Activated CD4-positive, alpha-beta memory T cell treated with anti-CD3 and anti-CD28 coated beads for 36 hours (primary cell): ENCODE measurements at regions of chr1 and their contacts with region 1.

Region 1: DNA sequence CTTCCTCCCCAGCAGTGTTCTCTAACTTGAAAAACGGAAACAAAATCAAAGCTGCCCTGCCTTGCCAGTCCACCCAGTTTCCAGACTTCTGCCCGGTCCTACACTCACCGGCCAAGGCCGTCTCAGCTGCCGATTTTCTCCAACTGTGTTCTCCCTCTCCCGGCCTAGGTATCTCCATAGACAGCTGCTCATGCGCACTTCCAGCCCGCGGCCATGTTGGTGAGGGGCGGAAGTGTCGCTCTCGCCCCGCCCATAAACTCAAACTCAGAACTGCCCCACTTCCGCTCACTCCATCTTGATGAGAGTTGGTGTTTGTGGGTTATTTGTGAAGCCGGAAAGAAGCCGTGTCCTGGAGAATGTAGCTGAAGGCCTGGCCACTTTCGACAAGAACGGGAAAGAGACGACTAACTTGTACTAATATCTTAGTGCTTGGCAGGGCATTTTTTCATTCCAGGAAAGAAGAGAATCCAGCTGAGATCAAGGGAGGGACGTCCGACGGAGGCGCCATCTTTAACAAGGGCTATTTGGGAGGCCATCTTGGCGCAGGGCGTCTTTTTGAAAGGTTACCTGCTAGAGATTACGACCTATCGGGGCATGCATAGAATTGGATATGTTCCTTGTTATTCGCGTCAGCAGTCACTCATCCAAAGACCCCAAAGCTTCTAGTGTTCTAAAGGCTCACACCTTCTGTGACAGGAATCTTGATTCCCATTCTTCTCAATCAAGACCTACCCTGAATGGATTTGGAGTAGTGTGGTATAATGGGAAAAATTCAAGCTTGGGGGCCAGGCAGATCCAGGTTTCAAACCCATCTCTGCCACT is at the start of gene USF1:
- DNase-seq: peak; percentile 96
- H3K4me3 Mint-ChIP-seq: peak within 1 kb of the TSS; percentile 90
- H3K27ac Mint-ChIP-seq: peak within 1 kb of the TSS; percentile 96
- H3K4me1 Mint-ChIP-seq: peaks cover 29% of the 10 kb centered on the region
- H3K27me3 Mint-ChIP-seq: no peaks in the 10 kb centered on the region
- total RNA-seq, gene USF1: 43.4 to 43.7 TPM

Region 2: GRCh38 chr1:160997323-160998038 is 48.5 kb before region 1 on chr1:
- CTCF ChIA-PET with region 1: interaction called, 33 read pairs
- POLR2A ChIA-PET with region 1: interaction called, 7 read pairs
- intact Hi-C with region 1: loop called (anchors 10 kb)
- DNase-seq: peak; percentile 68
- H3K4me3 Mint-ChIP-seq: no peak overlapping the region
- H3K27ac Mint-ChIP-seq: peak overlapping the region; percentile 31
- H3K4me1 Mint-ChIP-seq: peaks cover 22% of the 10 kb centered on the region
- H3K27me3 Mint-ChIP-seq: no peaks in the 10 kb centered on the region

Region 3: GRCh38 chr1:161013488-161014230 is 32.3 kb before region 1 on chr1:
- CTCF ChIA-PET with region 1: interaction called, 3 read pairs
- POLR2A ChIA-PET with region 1: interaction called, 6 read pairs
- intact Hi-C with region 1: loop called (anchors 1 kb)
- DNase-seq: peak; percentile 87
- H3K4me3 Mint-ChIP-seq: peak overlapping the region; percentile 73
- H3K27ac Mint-ChIP-seq: peak overlapping the region; percentile 95
- H3K4me1 Mint-ChIP-seq: peaks cover 52% of the 10 kb centered on the region
- H3K27me3 Mint-ChIP-seq: no peaks in the 10 kb centered on the region

Region 4: DNA sequence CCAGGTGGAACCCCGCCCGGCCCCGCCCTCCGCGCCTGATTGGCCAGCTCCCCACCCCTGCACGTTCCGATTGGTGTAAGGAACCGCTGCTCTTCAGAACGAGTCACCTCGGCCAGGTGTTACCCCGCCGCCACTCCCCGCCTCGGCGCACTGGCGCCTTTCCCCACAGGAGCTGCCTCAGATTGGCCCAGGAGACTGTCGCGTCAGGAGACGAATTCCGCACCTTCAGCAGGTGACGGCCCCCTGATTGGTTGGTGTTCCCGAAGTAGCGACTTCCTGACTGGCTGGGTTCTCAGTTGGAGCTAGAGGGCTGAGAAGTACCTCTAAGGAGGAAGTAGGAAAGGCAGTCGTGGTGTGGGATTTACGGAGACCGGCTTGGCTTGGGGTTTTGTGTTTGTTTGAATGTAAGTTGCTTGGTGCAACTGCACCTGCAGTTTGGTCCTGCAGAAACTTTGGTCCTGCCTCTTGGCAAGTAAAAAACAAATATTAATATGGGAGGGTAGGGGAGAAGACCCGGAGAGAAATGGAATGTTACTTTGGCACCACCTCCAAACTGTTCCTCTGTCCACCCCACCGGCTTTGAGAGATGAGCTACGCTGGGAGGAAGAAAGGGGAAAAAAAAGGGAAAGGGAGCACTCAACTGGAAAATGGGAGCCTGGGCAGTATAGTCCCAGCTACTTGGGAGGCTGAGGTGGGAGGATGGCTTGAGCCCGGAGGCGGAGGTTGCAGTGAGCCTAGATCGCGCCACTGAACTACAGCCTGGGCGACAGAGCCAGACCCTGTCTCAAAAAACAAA is 24.6 kb before region 1 on chr1:
- CTCF ChIA-PET with region 1: interaction called, 5 read pairs
- POLR2A ChIA-PET with region 1: interaction called, 10 read pairs
- intact Hi-C with region 1: no loop called
- DNase-seq: peak; percentile 92
- H3K4me3 Mint-ChIP-seq: peak overlapping the region; percentile 86
- H3K27ac Mint-ChIP-seq: peak overlapping the region; percentile 82
- H3K4me1 Mint-ChIP-seq: peaks cover 51% of the 10 kb centered on the region
- H3K27me3 Mint-ChIP-seq: no peaks in the 10 kb centered on the region

Region 5: GRCh38 chr1:161066694-161067093 is 20.7 kb after region 1 on chr1:
- CTCF ChIA-PET with region 1: interaction called, 21 read pairs
- POLR2A ChIA-PET with region 1: interaction called, 39 read pairs
- intact Hi-C with region 1: loop called (anchors 1 kb)
- DNase-seq: peak; percentile 53
- H3K4me3 Mint-ChIP-seq: peak overlapping the region; percentile 97
- H3K27ac Mint-ChIP-seq: peak overlapping the region; percentile 99
- H3K4me1 Mint-ChIP-seq: peaks cover 61% of the 10 kb centered on the region
- H3K27me3 Mint-ChIP-seq: no peaks in the 10 kb centered on the region

Region 6: GRCh38 chr1:161132410-161133219 is 86.7 kb after region 1 on chr1 and contains the start of gene DEDD:
- CTCF ChIA-PET with region 1: interaction called, 5 read pairs
- POLR2A ChIA-PET with region 1: interaction called, 3 read pairs
- intact Hi-C with region 1: loop called (anchors 1 kb)
- DNase-seq: peak; percentile 96
- H3K4me3 Mint-ChIP-seq: no peak within 1 kb of the TSS
- H3K27ac Mint-ChIP-seq: no peak within 1 kb of the TSS
- H3K4me1 Mint-ChIP-seq: peaks cover 43% of the 10 kb centered on the region
- H3K27me3 Mint-ChIP-seq: no peaks in the 10 kb centered on the region
- total RNA-seq, gene DEDD: 35.0 to 40.2 TPM